ENCODE measurements at regions of chr4 and their contacts with region 1.

Region 1: DNA sequence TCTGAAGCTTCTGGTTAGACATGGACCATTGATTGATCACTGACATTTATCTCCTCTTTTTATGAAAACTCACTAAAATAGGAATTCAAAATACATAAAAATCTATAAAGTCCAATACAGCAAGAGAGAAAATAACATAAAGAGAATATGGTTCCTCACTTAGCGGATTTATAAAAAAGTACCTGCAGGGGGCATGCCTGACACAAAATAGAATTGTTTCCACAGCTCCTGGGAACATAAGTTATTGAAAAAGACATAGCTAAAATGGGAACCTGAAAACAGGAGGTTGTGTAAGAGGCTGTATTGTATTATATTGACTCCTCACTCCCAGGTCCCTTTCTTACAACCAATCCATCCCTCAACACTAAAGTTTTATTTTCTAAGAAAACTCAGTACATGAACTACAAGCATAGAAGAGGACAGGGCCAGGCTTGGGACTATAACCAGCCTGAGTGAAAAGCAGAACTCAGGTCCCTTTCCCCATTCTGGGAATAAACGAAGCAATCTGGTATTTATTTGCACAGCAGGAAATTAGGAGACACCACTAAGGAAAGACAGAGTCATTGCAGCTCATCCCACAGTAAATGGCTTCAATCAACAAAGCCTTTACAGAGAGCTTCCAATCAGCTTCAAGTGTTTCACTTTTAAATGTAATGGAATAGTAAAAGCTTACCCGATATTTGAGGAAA is 121.1 kb upstream of the NDST4 start:
- DNase-seq: no peak
- H3K27ac ChIP-seq: no peak overlapping the region
- CTCF ChIP-seq: peak; percentile 11; the same call in 1 of the 2 replicates

Region 2: DNA sequence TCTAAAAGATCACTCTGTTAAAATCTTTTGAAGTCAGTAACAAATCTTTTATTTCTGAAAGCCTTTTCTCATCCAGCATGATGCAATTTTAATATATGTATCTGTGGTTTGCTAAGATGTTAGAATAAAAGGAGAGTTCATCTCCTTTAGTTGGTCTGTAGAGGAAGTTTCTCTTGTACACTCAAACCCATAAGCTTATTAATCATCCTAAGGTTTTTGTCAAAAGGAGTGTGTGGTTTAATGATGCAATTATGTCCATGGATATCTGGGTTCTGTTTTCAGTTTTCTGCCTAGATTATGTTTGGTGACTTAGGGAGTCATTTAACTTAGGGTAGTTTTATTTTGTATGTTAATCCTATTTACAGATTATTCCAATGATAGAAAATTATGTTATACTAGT is 69.0 kb before region 1 on chr4:
- CTCF ChIA-PET with region 1: no interaction called
- POLR2A ChIA-PET with region 1: no interaction called
- DNase-seq: no peak
- H3K27ac ChIP-seq: no peak overlapping the region
- CTCF ChIP-seq: no peak

Region 3: DNA sequence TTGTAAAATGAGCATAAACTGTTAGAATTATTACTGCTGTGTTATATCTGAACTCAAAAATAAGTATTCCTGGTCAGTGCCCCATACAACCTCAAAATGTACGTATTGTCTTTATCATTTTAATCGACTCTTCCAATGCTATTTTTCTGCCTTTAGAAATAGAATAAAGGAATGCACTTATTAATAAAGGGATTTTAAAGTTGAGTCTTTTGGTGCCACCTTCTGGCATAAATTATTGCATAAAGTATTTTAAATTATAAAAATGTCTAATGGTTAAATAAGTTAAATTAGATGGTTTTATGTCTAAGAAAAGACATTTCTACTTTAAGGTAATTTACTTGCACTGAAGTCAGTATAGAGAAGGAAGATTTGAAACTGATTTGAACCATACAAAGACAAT is 302.8 kb after region 1 on chr4:
- CTCF ChIA-PET with region 1: interaction called, 11 read pairs
- POLR2A ChIA-PET with region 1: no interaction called
- DNase-seq: no peak
- H3K27ac ChIP-seq: no peak overlapping the region
- CTCF ChIP-seq: no peak